ENCODE measurements at regions of chr7 and their contacts with region 1.

Region 1: DNA sequence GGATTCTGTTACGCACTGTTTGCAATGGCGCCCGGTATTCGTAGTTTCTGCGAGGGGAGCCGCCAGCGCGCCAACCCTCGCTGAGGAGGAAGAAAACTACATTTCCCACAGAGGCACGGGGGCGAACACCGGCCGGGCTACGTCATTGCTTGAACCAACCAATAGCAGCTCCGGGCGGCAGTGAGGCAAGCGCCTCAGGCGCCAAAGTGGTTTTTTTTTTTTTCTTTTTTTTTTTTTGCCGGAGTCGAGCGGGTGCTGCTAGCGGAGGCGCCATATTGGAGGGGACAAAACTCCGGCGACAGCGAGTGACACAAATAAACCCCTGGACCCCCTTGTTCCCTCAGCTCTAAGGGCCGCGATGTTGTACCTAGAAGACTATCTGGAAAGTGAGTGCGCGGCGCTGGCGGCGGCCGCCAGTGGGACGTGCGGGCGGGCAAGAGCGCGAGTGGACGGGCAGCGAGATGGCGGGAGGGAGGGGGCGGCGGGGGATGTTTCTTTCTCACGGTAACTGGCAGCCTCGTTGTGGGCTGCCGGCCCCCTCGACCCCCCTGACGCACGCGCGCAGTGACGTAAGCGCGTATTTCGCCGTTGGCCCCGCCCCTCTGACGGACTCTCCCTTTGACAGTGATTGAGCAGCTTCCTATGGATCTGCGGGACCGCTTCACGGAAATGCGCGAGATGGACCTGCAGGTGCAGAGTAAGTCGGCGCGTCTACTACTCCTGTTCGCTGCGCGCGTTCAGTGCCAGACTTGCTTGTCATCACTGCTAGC is at the start of gene ING3:
- DNase-seq: peak; percentile 99
- ATAC-seq: peak; percentile 89
- H3K4me3 Mint-ChIP-seq: peak within 1 kb of the TSS; percentile 95
- H3K27ac Mint-ChIP-seq: peak within 1 kb of the TSS; percentile 99
- H3K4me1 Mint-ChIP-seq: peaks cover 26% of the 10 kb centered on the region
- H3K27me3 Mint-ChIP-seq: peaks cover 3% of the 10 kb centered on the region
- CTCF ChIP-seq: no peak
- total RNA-seq, gene ING3: 32.7 and 36.1 TPM in 2 replicates

Region 2: GRCh38 chr7:120857588-120858573 is 92.8 kb before region 1 on chr7 and contains the start of gene TSPAN12:
- CTCF ChIA-PET with region 1: no interaction called
- POLR2A ChIA-PET with region 1: interaction called, 3 read pairs
- intact Hi-C with region 1: loop called (anchors 2 kb)
- DNase-seq: peak; percentile 54
- ATAC-seq: peak; percentile 87
- H3K4me3 Mint-ChIP-seq: peak within 1 kb of the TSS; percentile 90
- H3K27ac Mint-ChIP-seq: no peak within 1 kb of the TSS
- H3K4me1 Mint-ChIP-seq: peaks cover 14% of the 10 kb centered on the region
- H3K27me3 Mint-ChIP-seq: peaks cover 59% of the 10 kb centered on the region
- CTCF ChIP-seq: no peak
- total RNA-seq, gene TSPAN12: not detected in 2 replicates

Region 3: GRCh38 chr7:121081327-121081936 is 130.7 kb after region 1 on chr7:
- CTCF ChIA-PET with region 1: no interaction called
- POLR2A ChIA-PET with region 1: interaction called, 11 read pairs
- intact Hi-C with region 1: no loop called
- DNase-seq: no peak
- ATAC-seq: peak; percentile 83
- H3K4me3 Mint-ChIP-seq: no peak overlapping the region
- H3K27ac Mint-ChIP-seq: no peak overlapping the region
- H3K4me1 Mint-ChIP-seq: peaks cover 11% of the 10 kb centered on the region
- H3K27me3 Mint-ChIP-seq: peaks cover 3% of the 10 kb centered on the region
- CTCF ChIP-seq: peak; percentile 46

Region 4: DNA sequence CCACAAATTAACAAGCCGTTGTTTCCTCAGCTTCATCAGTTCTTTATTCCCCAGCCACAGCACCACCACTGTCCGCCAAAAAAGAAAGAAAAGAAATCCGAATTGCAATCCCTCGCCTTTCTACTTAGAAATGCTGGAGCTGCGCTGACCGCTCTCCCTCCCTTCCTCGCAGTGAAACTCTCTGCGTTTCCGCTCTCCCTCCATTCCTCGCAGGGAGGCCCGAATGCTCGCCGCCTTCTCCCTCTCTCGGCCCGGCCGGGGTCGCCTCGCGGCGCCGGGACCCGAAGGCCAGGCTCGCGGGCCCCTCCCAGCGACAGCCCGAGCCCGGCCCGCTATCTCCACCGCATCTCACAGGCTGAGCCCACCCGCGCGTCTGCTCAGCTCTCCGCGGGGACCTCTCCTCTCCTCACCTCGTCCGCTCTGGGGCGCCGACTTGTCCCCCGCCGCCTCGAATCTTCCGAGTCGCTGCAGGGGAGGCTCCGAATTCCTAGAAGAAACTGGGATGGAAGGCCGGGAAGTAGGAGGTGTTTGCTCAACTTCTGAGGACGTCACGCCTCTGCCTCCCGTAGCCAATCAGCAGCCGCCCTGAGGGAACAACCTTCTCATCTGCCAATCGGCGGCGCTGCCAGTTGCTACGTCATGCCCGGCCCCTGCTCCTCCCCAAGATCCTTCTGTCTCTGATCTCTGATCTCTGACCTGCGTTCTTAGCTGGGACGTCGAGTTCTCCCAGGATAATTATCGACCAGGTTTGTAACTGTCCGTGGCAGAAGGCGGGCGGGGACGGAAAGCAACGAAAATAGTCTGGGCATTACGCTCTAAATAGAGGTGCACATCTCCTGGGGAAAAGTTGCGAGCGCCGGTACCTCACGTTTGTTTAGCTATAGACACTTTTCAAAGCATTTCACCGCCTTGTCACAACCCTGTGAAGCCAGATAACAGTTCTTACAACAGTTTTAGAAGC is 1193.3 kb after region 1 on chr7 and contains the start of gene AASS:
- CTCF ChIA-PET with region 1: no interaction called
- POLR2A ChIA-PET with region 1: no interaction called
- intact Hi-C with region 1: loop called (anchors 1 kb)
- DNase-seq: peak; percentile 78
- ATAC-seq: peak; percentile 98
- H3K4me3 Mint-ChIP-seq: peak within 1 kb of the TSS; percentile 96
- H3K27ac Mint-ChIP-seq: peak within 1 kb of the TSS; percentile 80
- H3K4me1 Mint-ChIP-seq: peaks cover 14% of the 10 kb centered on the region
- H3K27me3 Mint-ChIP-seq: peaks cover 8% of the 10 kb centered on the region
- CTCF ChIP-seq: no peak
- total RNA-seq, gene AASS: 5.9 and 6.3 TPM in 2 replicates